Right ventricle myocardium inferior (tissue), 1 donor: ENCODE measurements at regions of chr6 and their contacts with region 1.

Region 1: GRCh38 chr6:136792410-136793262 is at the start of gene MAP3K5:
- DNase-seq: peak; percentile 98
- ATAC-seq: peak; percentile 93
- total RNA-seq, gene MAP3K5: 34.7 TPM

Region 2: DNA sequence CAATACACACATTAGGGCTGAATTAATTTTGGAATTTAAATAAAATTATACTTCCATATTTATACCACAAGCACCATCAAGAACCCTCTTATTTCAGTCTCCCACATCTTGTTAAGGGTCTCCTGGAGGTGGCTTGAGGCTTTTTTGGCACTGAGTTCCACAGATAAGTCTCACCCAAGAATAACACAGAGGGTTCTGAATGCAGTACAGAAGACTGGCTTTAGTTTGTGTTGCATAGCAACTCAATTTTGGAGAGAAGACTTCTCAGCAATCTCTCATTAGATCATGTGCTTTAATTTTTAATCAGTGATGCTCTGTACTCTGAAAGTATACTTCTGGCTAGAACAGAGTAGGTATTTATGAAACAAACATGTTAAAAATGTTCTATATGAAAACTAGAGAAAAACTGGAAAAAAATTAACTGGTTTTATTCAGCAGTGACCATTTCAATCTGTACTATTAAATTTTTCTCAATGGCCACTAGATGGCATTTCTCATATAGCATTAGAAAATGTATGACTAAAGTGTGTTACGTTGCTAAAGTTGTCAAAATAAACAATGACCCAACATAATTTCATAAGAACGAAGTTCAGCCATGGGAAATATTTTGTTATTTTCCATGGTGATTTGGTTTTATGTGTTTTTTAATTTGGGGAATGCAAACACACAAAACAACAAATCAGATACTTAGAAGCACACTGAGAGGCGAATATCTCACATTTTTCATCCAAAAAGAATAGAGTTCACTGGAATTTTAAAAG is 209.7 kb before region 1 on chr6:
- intact Hi-C with region 1: loop called (anchors 2 kb)
- DNase-seq: no peak
- ATAC-seq: peak; percentile 48

Region 3: GRCh38 chr6:136643850-136644596 is 148.6 kb before region 1 on chr6:
- intact Hi-C with region 1: loop called (anchors 1 kb)
- DNase-seq: peak; percentile 88
- ATAC-seq: peak; percentile 95

Region 4: GRCh38 chr6:136706420-136706819 is 86.2 kb before region 1 on chr6:
- intact Hi-C with region 1: no loop called
- DNase-seq: no peak
- ATAC-seq: no peak

Region 5: DNA sequence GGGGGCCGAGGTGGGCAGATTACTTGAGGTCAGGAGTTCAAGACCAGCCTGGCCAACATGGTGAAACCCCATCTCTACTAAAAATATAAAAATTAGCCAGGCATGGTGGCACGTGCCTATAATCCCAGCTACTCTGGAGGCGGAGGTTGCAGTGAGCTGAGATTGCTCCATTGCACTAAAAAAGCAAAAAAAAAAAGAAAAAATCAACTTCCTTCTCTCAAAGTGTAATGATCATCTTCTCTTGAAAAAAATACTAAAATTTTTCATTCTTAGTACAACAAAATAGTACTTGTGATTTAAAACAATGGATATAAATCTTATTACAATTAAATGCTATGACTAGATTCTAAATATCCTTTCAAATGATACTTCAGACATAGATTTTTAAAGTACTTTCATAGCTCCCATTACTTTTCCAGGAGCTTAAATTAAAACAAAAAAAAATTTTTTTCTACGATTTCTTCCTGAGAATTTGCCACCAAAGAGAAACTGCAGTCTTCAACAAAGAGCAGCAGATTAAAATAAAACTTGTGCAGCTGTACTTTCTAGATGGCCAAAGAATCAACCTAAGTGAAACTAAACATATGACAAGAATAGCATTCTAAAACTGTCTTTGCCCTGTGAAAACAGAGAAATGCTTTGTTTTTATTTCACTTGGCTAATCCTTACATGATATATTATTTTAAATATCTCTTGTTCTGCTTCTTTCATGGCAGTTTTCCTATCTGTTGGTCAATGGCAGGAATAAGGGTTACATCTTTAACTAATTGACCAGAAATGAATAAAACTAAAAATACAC is 75.5 kb before region 1 on chr6:
- intact Hi-C with region 1: loop called (anchors 2 kb)
- DNase-seq: no peak
- ATAC-seq: no peak

Region 6: GRCh38 chr6:136822376-136823127 is 29.9 kb after region 1 on chr6 and contains the start of gene PEX7:
- intact Hi-C with region 1: loop called (anchors 2 kb)
- DNase-seq: peak; percentile 92
- ATAC-seq: peak; percentile 95
- total RNA-seq, gene PEX7: 11.7 TPM

Region 7: DNA sequence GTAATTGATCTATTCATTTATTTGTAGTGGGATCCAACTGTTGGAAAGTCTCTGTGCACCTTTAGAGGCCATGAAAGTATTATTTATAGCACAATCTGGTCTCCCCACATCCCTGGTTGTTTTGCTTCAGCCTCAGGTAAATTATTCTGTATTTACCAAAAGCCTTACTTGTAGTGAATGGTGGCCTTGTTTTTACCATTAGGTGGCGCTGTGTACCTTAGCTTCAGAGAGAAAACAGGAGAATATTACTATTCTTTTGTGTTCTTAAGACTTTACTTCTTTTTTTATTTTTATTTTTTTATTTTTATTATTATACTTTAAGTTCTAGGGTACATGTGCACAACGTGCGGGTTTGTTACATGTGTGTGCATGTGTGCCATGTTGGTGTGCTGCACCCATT is 53.4 kb after region 1 on chr6:
- intact Hi-C with region 1: no loop called
- DNase-seq: no peak
- ATAC-seq: no peak